Activated naive CD4-positive, alpha-beta T cell treated with anti-CD3 and anti-CD28 coated beads for 36 hours (primary cell): ENCODE measurements at regions of chr6 and their contacts with region 1.

Region 1: DNA sequence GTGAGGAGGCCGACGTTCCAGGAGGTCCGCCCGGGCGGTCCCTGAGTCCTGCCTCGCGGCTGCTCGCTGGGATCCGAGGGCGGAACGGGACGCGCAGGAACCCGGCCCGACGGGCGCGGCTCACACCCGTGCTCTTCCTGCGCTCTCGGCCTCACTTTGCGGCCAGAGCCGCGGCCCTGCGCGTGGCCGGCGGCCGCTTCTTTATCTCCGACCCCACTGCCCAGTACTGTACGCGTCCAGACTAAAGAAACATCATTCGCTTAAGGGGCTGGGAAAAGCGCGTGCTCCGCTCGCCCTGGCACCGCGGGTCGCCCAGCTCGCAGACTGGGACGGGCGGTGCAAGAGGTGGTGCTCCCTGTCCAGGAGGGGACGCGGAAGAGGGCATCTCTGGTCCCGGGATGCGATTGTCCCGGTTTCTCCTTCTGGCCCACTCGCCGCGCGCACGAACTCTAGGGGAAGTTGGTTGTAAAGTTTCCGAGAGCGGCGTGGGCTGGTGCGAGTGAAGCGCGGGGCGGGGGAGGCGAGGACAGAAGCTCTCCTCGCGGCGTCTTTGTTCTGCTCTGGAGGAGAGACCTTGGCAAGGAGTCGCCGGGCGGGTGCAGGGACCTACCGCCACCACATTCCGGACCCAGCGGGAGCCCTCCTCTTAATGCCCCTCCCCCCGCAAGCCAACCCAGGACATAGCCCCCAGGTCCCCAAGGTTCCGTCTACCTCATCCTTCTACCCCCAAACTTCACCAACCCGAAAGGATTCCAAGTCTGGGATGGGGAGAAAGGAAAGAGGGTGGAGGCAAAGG is 71.0 kb downstream of the SOX4 start:
- DNase-seq: peak; percentile 20
- H3K4me3 Mint-ChIP-seq: peak overlapping the region; percentile 32
- H3K27ac Mint-ChIP-seq: no peak overlapping the region
- H3K4me1 Mint-ChIP-seq: peaks cover 27% of the 10 kb centered on the region
- H3K27me3 Mint-ChIP-seq: peaks cover 67% of the 10 kb centered on the region

Region 2: GRCh38 chr6:21870076-21870730 is 205.7 kb after region 1 on chr6:
- CTCF ChIA-PET with region 1: no interaction called
- intact Hi-C with region 1: no loop called
- DNase-seq: no peak
- H3K4me3 Mint-ChIP-seq: no peak overlapping the region
- H3K27ac Mint-ChIP-seq: no peak overlapping the region
- H3K4me1 Mint-ChIP-seq: no peaks in the 10 kb centered on the region
- H3K27me3 Mint-ChIP-seq: no peaks in the 10 kb centered on the region

Region 3: GRCh38 chr6:21922086-21922485 is 257.6 kb after region 1 on chr6:
- CTCF ChIA-PET with region 1: no interaction called
- intact Hi-C with region 1: loop called (anchors 10 kb)
- DNase-seq: no peak
- H3K4me3 Mint-ChIP-seq: no peak overlapping the region
- H3K27ac Mint-ChIP-seq: no peak overlapping the region
- H3K4me1 Mint-ChIP-seq: peaks cover 4% of the 10 kb centered on the region
- H3K27me3 Mint-ChIP-seq: no peaks in the 10 kb centered on the region